Activated CD4-positive, alpha-beta T cell treated with anti-CD3 and anti-CD28 coated beads for 36 hours (primary cell): ENCODE measurements at regions of chr16 and their contacts with region 1.

Region 1: DNA sequence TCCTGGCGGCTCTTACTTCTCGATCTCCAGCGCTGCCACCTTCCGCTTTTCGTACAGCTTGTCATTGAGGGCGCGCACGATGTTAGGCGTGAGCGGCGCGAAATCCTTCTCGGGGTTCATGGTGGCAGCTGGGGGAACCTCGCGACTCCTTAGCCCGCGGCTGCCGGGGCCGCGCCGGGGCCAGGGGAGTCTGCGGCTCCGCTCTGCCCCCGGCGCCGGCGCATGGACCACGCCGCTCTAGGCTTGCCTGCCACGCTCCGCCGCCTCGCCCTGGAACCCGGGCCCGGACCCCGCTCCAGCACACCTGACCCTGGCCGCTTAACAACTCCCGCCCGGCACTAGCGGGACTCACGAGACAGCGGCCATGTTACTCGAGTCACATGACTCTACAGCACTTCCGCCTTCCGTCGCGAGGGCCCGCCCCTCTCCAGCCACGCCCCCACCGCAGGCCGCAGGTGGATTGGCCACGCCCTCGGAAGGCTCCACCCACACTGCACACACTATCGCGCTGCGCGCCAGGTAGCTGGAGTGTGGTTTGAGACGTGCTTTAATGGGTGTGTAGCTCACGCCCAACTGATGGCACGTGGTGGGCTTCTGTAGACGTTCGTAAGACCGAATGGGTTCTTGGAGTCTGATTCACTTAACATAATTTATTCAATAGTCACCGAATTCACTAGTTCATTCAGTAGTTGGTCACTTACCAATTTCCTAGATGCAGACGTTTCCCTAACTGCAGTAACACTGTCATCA is at the start of gene VAC14:
- DNase-seq: peak; percentile 98
- ATAC-seq: peak; percentile 95
- H3K4me3 Mint-ChIP-seq: peak within 1 kb of the TSS; percentile 90
- H3K27ac Mint-ChIP-seq: peak within 1 kb of the TSS; percentile 83
- H3K4me1 Mint-ChIP-seq: peaks cover 31% of the 10 kb centered on the region
- H3K27me3 Mint-ChIP-seq: no peaks in the 10 kb centered on the region
- total RNA-seq, gene VAC14: 24.8 to 26.2 TPM

Region 2: GRCh38 chr16:70348991-70349390 is 452.0 kb before region 1 on chr16:
- CTCF ChIA-PET with region 1: no interaction called
- POLR2A ChIA-PET with region 1: no interaction called
- intact Hi-C with region 1: loop called in 1 of 2 experiments (anchors 1 kb)
- DNase-seq: no peak
- ATAC-seq: no peak
- H3K4me3 Mint-ChIP-seq: no peak overlapping the region
- H3K27ac Mint-ChIP-seq: no peak overlapping the region
- H3K4me1 Mint-ChIP-seq: peaks cover 36% of the 10 kb centered on the region
- H3K27me3 Mint-ChIP-seq: no peaks in the 10 kb centered on the region

Region 3: GRCh38 chr16:70523076-70523742 is 277.7 kb before region 1 on chr16 and contains the start of gene COG4:
- CTCF ChIA-PET with region 1: no interaction called
- POLR2A ChIA-PET with region 1: no interaction called
- intact Hi-C with region 1: loop called in 1 of 2 experiments (anchors 1 kb)
- DNase-seq: peak; percentile 96
- ATAC-seq: peak; percentile 79
- H3K4me3 Mint-ChIP-seq: peak within 1 kb of the TSS; percentile 96
- H3K27ac Mint-ChIP-seq: peak within 1 kb of the TSS; percentile 98
- H3K4me1 Mint-ChIP-seq: peaks cover 46% of the 10 kb centered on the region
- H3K27me3 Mint-ChIP-seq: no peaks in the 10 kb centered on the region
- total RNA-seq, gene COG4: 33.5 to 37.6 TPM

Region 4: DNA sequence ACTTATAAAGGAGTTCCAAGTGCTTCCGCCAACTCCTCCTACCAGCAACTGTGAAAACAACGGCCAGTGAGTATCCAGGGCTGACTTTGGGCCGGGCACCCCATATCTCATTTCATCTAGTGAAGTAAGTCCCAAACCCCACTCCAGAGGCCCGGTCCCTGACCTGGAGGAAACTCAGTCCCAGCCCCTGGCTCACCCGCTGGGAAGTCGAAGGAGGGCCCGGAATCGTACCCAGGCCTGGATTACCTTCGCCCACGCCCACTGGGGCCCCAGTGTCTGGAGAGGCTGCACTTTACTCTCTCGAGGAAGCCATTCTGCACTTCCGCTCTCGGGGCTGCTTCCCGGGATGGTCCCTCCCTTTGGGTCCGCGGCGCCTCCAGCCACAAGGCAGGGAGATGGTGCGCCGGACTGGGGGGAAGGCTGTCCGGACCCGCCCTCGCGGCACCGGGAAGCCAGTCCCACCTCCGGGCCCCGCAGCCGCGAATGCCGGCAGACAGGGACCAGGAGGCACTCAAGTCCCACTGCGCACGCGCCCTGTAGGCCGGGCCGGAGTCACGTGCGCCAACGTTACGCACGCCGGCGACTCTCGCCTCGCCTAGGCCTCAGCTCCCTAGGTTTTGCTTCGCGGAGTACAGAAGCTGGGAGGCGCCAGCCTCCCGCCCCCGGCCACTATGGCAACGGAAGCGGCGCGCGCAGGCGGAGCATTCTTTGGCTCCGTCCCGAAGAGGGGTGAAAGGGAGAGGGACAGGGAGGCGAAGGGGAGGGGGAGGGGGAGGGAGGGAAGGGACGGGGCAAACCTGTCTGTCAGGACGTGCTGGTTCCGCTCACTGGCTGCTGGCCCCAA is 488.2 kb after region 1 on chr16 and contains the start of gene CMTR2:
- CTCF ChIA-PET with region 1: no interaction called
- POLR2A ChIA-PET with region 1: no interaction called
- intact Hi-C with region 1: loop called (anchors 1 to 10 kb)
- DNase-seq: peak; percentile 95
- ATAC-seq: peak; percentile 97
- H3K4me3 Mint-ChIP-seq: peak within 1 kb of the TSS; percentile 83
- H3K27ac Mint-ChIP-seq: peak within 1 kb of the TSS; percentile 90
- H3K4me1 Mint-ChIP-seq: peaks cover 15% of the 10 kb centered on the region
- H3K27me3 Mint-ChIP-seq: peaks cover 16% of the 10 kb centered on the region
- total RNA-seq, gene CMTR2: 15.8 to 16.5 TPM

Region 5: GRCh38 chr16:71723537-71724319 is 922.8 kb after region 1 on chr16:
- CTCF ChIA-PET with region 1: no interaction called
- POLR2A ChIA-PET with region 1: no interaction called
- intact Hi-C with region 1: loop called in 1 of 2 experiments (anchors 2 kb)
- DNase-seq: peak; percentile 87
- ATAC-seq: peak; percentile 87
- H3K4me3 Mint-ChIP-seq: peak overlapping the region; percentile 95
- H3K27ac Mint-ChIP-seq: peak overlapping the region; percentile 68
- H3K4me1 Mint-ChIP-seq: peaks cover 16% of the 10 kb centered on the region
- H3K27me3 Mint-ChIP-seq: no peaks in the 10 kb centered on the region

Region 6: GRCh38 chr16:72093448-72094265 is 1292.7 kb after region 1 on chr16 and contains the starts of genes DHX38 and TXNL4B:
- CTCF ChIA-PET with region 1: no interaction called
- POLR2A ChIA-PET with region 1: no interaction called
- intact Hi-C with region 1: loop called (anchors 5 kb)
- DNase-seq: peak; percentile 95
- ATAC-seq: peak; percentile 98
- H3K4me3 Mint-ChIP-seq: peak within 1 kb of the TSS; percentile 96
- H3K27ac Mint-ChIP-seq: peak within 1 kb of the TSS; percentile 92
- H3K4me1 Mint-ChIP-seq: peaks cover 41% of the 10 kb centered on the region
- H3K27me3 Mint-ChIP-seq: no peaks in the 10 kb centered on the region
- total RNA-seq, gene DHX38: 55.9 to 79.0 TPM
- total RNA-seq, gene TXNL4B: 17.6 to 24.6 TPM